PC-3 (cell line): ENCODE measurements at regions of chr2 and their contacts with region 1.

Region 1: GRCh38 chr2:14634201-14634884 is 1.8 kb downstream of the LRATD1 start:
- DNase-seq: peak; percentile 91
- ATAC-seq: peak; percentile 50
- H3K4me3 ChIP-seq: peak overlapping the region; percentile 91
- H3K27ac ChIP-seq: peak overlapping the region; percentile 84
- H3K4me1 ChIP-seq: peaks cover 26% of the 10 kb centered on the region
- H3K27me3 ChIP-seq: no peaks in the 10 kb centered on the region
- CTCF ChIP-seq: peak; percentile 85

Region 2: DNA sequence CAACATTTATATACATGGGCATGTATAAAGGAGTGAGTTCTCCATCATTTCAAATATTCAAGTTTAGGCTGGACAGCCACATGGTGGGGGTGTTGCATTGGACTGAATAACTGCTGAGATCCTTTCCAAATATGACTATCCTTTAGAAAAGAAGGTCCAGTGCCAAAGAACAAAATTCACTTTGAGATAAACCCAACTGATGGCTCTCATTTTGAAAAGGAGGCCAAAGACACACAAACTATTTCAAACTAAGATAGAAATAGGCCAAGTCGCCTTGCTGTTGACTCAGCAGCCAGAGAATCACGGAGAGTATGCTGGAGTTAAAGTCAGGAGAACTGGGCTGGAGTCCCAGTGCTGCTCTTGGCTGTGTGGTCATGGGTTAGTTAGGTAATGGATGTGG is 206.3 kb before region 1 on chr2:
- CTCF ChIA-PET with region 1: interaction called, 12 read pairs
- POLR2A ChIA-PET with region 1: no interaction called
- intact Hi-C with region 1: loop called (anchors 1 kb)
- DNase-seq: peak; percentile 60
- ATAC-seq: peak; percentile 81
- H3K4me3 ChIP-seq: no peak overlapping the region
- H3K27ac ChIP-seq: no peak overlapping the region
- H3K4me1 ChIP-seq: peaks cover 5% of the 10 kb centered on the region; the same call in 1 of the 2 replicates
- H3K27me3 ChIP-seq: no peaks in the 10 kb centered on the region
- CTCF ChIP-seq: peak; percentile 69

Region 3: DNA sequence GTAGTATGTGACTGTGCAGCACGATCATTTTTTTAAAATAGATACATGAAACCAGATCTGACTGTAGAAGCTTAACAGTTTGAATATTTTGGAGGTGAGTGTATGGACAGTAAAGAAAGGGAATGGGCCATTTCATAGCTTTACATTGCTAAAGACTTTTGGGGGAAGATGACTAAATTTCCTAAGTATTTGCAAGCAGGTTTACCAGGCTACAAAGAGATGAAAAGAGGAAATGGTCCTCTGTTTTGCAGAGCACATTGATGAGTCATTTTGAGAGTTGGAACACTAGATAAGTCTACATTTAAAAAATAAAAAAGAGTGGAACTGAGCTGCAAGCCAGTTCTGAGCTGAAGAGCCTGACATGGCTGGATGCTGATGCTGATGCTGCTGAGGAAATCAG is 117.5 kb before region 1 on chr2:
- CTCF ChIA-PET with region 1: interaction called, 10 read pairs
- POLR2A ChIA-PET with region 1: interaction called, 21 read pairs
- intact Hi-C with region 1: loop called (anchors 1 kb)
- DNase-seq: peak; percentile 97
- ATAC-seq: peak; percentile 84
- H3K4me3 ChIP-seq: no peak overlapping the region
- H3K27ac ChIP-seq: peak overlapping the region; percentile 94
- H3K4me1 ChIP-seq: peaks cover 46% of the 10 kb centered on the region
- H3K27me3 ChIP-seq: no peaks in the 10 kb centered on the region
- CTCF ChIP-seq: no peak

Region 4: DNA sequence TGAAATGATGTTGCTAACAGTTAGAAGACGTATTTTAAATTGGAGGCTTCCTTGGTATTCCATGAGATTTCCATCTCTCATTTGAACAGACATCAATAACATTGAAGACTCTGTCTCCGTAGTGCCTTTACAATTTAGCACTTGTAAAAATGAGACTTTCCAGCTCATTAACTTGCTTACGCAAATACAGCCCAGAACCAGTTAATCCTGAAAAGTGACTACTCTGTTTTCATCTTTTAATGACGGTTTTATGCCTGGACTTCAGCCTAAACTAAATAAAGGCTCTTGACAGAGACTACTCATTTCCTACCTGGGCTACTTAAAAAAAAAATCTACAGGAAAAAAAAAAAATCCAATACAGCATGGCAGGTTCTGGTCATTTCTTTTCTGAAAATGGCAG is 146.8 kb after region 1 on chr2:
- CTCF ChIA-PET with region 1: interaction called, 3 read pairs
- POLR2A ChIA-PET with region 1: interaction called, 3 read pairs
- intact Hi-C with region 1: loop called (anchors 5 kb)
- DNase-seq: peak; percentile 97
- ATAC-seq: peak; percentile 63
- H3K4me3 ChIP-seq: peak overlapping the region; percentile 18; the same call in 1 of the 2 replicates
- H3K27ac ChIP-seq: peak overlapping the region; percentile 94
- H3K4me1 ChIP-seq: peaks cover 49% of the 10 kb centered on the region
- H3K27me3 ChIP-seq: no peaks in the 10 kb centered on the region
- CTCF ChIP-seq: no peak

Region 5: DNA sequence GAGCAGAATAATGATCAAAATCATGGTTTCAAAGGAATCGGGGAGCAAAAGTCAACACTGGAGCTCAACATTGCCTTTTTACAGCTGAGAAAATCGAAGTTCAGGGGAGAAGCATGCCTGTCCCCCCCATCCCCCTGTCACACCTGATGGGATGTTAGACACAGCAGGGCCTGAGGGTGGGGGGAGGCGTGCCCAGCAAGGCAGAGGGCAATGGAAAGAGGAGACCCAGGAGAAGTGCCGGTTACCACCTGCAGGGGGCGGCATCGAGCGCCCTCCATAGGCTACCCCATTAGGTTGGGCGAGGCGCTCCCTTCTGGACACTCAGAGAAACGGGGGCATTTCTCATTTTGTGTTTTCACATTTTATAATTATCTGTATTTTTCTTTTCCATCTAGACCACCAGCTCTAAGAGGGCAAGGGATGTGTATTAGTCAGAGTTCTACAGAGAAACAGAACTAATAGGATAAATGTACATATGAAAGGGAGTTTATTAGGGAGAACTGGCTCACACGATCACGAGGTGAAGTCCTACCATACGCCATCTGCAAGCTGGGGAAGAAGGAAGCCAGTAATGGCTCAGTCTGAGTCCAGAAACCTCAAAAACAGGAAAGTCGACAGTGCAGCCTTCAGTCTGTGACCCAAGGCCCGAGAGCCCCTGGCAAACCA is 269.5 kb after region 1 on chr2:
- CTCF ChIA-PET with region 1: no interaction called
- POLR2A ChIA-PET with region 1: no interaction called
- intact Hi-C with region 1: loop called (anchors 5 kb)
- DNase-seq: peak; percentile 79
- ATAC-seq: peak; percentile 82
- H3K4me3 ChIP-seq: no peak overlapping the region
- H3K27ac ChIP-seq: no peak overlapping the region
- H3K4me1 ChIP-seq: peaks cover 4% of the 10 kb centered on the region; the same call in 1 of the 2 replicates
- H3K27me3 ChIP-seq: no peaks in the 10 kb centered on the region
- CTCF ChIP-seq: peak; percentile 95

Region 6: DNA sequence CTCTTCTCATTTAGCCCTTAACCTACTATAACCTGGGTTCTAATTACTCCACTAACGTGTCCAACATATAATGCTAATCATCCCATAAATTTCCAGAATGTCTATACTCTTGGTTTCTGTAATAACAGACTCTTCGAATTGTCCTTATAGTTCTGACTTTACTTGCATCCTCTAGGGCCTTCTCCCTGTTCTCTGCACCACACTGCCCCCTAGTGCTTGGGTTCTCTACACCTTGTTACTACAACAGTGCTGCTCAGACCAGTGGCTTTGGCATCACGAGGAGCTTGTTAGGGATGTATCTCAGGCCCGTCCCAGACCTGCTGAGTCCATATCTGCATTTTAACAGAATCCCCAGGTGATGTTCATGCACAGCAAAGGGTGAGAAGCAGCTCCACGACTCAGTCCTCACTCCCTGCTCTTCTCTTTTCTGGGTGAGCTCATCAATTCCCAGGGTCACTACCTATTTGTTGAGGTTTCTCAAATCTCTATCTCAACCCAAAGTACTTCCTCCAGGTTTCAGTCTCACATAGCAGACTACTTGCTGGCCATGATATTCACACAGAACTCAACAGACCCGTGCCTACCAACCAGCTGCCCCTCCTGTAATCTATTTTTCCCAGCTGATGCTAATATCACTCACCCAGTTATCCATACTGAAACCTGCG is 942.9 kb after region 1 on chr2:
- CTCF ChIA-PET with region 1: interaction called, 3 read pairs
- POLR2A ChIA-PET with region 1: no interaction called
- intact Hi-C with region 1: loop called (anchors 5 kb)
- DNase-seq: peak; percentile 89
- ATAC-seq: peak; percentile 97
- H3K4me3 ChIP-seq: no peak overlapping the region
- H3K27ac ChIP-seq: no peak overlapping the region
- H3K4me1 ChIP-seq: peaks cover 6% of the 10 kb centered on the region; the same call in 1 of the 2 replicates
- H3K27me3 ChIP-seq: no peaks in the 10 kb centered on the region
- CTCF ChIP-seq: peak; percentile 92